K562 (cell line): ENCODE measurements at regions of chr10 and their contacts with region 1.

Region 1: GRCh38 chr10:50417886-50418830 is 166.8 kb upstream of the ASAH2 start:
- DNase-seq: peak; percentile 77 to 94 (median 84)
- ATAC-seq: peak; percentile 81
- H3K4me3 ChIP-seq: peak overlapping the region; percentile 71
- H3K27ac ChIP-seq: peak overlapping the region; percentile 75
- H3K4me1 ChIP-seq: peaks cover 8 to 42% of the 10 kb centered on the region in 2 experiments
- H3K27me3 ChIP-seq: no peaks in the 10 kb centered on the region
- CTCF ChIP-seq: no peak
- EP300 ChIP-seq: peak; percentile 50; the same call in 1 of the 2 replicates
- POLR2A ChIP-seq: peak; percentile 76
- RAD21 ChIP-seq: no peak

Region 2: DNA sequence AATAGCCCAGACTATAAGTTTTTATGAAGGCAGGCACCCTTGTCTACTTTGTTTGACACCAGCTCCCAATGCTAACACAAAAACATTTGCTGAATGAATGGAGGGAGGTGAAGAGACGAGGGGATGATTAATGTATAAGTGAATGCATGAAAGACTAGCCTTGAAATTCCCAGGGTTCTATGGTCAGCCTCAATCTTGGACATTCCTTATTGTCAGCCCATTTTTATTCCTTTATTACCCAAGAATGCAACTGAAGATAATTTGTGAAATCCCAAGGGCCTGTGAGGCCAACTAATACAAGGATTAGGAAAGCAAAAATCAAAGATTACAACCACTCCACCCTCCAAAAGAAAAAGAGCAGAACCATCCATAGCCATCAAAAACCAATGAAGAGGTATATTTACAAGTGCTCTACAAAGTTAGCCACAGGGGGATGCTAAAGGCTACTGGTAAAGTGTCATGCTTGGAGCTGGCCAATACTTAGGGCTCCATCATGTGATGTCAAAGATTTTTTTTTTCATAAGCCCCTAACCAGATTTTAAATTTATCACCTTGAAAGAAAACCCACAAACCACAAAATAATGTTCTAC is 126.8 kb before region 1 on chr10:
- CTCF ChIA-PET with region 1: interaction called, 4 read pairs
- POLR2A ChIA-PET with region 1: no interaction called
- in situ Hi-C with region 1: no loop called
- intact Hi-C with region 1: loop called (anchors 1 kb)
- DNase-seq: peak; percentile 42 to 68 (median 60)
- ATAC-seq: peak; percentile 88
- H3K4me3 ChIP-seq: no peak overlapping the region
- H3K27ac ChIP-seq: no peak overlapping the region
- H3K4me1 ChIP-seq: peaks cover 9 to 16% of the 10 kb centered on the region in 2 experiments; a peak in 3 of 5 replicates
- H3K27me3 ChIP-seq: no peaks in the 10 kb centered on the region
- CTCF ChIP-seq: peak; percentile 74 to 89 (median 76)
- EP300 ChIP-seq: no peak
- POLR2A ChIP-seq: no peak
- RAD21 ChIP-seq: peak; percentile 91 to 97

Region 3: DNA sequence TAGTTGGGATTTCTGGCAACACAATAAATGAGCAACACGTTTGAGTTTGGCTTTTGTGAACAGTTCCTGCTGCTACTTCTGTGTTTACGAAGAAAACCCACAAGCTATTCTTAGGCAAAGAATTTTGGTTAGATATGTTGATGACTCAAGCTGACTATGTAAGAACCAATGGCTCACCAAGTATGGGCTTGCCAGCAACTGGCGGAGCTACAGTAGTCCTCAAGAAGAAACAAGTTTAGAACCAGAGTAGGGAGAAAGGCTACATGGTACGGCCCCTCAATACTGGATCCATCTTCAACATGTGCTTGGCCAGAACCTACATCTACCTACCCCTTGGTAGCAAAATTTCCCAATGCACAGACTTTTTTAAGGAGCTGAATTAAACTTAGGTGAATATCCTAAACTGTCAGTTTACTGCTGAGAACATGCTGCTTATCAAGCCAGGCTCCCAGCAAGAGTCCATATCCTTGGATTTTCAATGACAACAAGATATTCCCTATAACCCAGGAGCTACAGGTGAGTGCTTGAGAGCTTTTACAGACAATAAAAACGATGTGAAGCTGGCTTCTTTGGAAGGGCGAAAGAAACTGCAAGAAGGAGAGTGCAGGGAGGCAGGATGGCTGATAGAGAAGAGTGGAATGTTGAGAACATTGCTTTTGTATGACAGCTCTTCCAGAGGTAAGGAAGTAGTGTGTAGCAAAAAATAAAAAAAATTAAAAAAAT is 92.5 kb before region 1 on chr10:
- CTCF ChIA-PET with region 1: no interaction called
- POLR2A ChIA-PET with region 1: interaction called, 4 read pairs
- in situ Hi-C with region 1: no loop called
- intact Hi-C with region 1: loop called (anchors 2 kb)
- DNase-seq: peak in 3 of 4 experiments; percentile 39 to 92 (median 74)
- ATAC-seq: peak; percentile 58
- H3K4me3 ChIP-seq: peak overlapping the region; percentile 32
- H3K27ac ChIP-seq: peak overlapping the region; percentile 97
- H3K4me1 ChIP-seq: peaks cover 19 to 80% of the 10 kb centered on the region in 2 experiments
- H3K27me3 ChIP-seq: no peaks in the 10 kb centered on the region
- CTCF ChIP-seq: no peak
- EP300 ChIP-seq: peak; percentile 88; the same call in 1 of the 2 replicates
- POLR2A ChIP-seq: no peak
- RAD21 ChIP-seq: no peak

Region 4: GRCh38 chr10:50396491-50397311 is 21.5 kb before region 1 on chr10:
- CTCF ChIA-PET with region 1: no interaction called
- POLR2A ChIA-PET with region 1: interaction called, 5 read pairs
- in situ Hi-C with region 1: no loop called
- intact Hi-C with region 1: loop called (anchors 2 kb)
- DNase-seq: peak in 2 of 4 experiments; percentile 37 to 75
- ATAC-seq: peak; percentile 79
- H3K4me3 ChIP-seq: no peak overlapping the region
- H3K27ac ChIP-seq: peak overlapping the region; percentile 37; the same call in 1 of the 3 replicates
- H3K4me1 ChIP-seq: peaks cover 14 to 57% of the 10 kb centered on the region in 2 experiments
- H3K27me3 ChIP-seq: no peaks in the 10 kb centered on the region
- CTCF ChIP-seq: no peak
- EP300 ChIP-seq: no peak; the same call in 1 of the 2 replicates
- POLR2A ChIP-seq: no peak
- RAD21 ChIP-seq: no peak

Region 5: DNA sequence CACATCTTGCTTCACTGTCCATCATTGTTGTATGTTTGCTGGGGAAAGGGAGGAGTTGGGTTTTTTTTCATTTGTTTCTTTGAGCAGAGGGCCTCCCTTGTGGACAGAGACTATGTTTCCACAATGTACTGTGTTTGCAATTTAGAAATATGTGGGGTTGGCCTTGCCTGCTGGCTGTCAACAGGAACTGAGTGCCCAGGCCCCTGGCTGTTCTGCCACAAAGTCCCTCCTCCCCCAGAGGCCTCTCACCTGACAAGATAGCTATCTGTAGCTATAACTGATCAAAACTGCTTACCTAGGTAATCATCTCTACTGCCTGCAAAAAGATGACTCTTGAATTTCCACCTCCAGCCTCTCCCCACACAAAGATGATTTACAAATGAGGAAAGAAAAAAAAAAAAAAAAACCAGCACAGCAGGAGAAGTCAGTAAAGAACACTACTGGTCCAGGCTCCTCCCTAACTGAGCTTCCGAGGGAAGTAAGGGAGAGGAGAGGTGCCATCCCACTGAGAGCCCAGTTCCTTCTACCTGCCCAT is 83.8 kb after region 1 on chr10:
- CTCF ChIA-PET with region 1: no interaction called
- POLR2A ChIA-PET with region 1: no interaction called
- in situ Hi-C with region 1: no loop called
- intact Hi-C with region 1: loop called (anchors 5 kb)
- DNase-seq: no peak
- ATAC-seq: peak; percentile 16
- H3K4me3 ChIP-seq: no peak overlapping the region
- H3K27ac ChIP-seq: no peak overlapping the region
- H3K4me1 ChIP-seq: peaks cover 8 to 30% of the 10 kb centered on the region in 2 experiments; a peak in 4 of 5 replicates
- H3K27me3 ChIP-seq: no peaks in the 10 kb centered on the region
- CTCF ChIP-seq: no peak
- EP300 ChIP-seq: no peak
- POLR2A ChIP-seq: no peak
- RAD21 ChIP-seq: no peak

Region 6: DNA sequence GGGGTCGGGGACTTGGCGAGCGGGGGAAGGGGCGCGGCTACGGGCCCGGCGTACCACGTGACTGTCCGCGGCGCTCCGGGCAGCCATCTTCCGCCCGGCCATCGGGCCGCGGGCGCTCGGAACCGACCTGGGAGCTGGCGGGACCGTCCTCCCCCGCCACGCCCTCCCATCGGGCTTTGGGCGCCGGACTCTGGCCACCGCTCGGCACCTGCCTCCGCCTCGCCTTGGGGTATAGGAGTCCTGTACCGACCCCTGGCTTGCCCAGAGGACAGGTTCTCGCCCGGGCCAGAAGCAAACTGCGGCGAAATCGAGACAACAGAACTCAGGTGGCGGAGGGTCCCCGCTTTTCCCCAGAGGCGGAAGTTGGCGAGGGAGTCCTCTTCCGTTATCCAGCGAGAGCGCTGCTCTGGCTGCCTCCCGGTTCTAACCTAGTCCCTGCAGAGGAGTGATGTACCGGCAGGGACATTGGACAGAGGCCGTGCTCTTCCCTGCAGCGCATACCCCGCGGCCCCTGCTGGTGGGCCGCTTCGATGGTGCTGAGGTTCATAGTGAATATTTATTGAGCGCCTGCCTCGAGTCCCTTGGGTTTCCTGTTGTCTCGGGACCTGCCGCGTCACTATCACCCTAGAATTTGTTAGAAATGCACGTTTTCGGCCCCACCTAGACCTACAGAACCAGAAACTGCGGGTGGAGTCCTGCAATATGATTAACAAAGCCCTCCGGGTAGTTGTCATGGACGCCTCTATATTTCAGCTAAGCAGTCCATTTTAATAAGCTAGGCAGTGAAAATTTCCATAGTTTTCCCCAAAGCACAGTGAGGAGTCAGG is 206.9 kb after region 1 on chr10:
- CTCF ChIA-PET with region 1: interaction called, 4 read pairs
- POLR2A ChIA-PET with region 1: interaction called, 6 read pairs
- in situ Hi-C with region 1: no loop called
- intact Hi-C with region 1: loop called (anchors 2 kb)
- DNase-seq: peak; percentile 91 to 93 (median 92)
- ATAC-seq: peak; percentile 73
- H3K4me3 ChIP-seq: peak overlapping the region; percentile 77
- H3K27ac ChIP-seq: peak overlapping the region; percentile 82
- H3K4me1 ChIP-seq: peaks cover 10 to 34% of the 10 kb centered on the region in 2 experiments
- H3K27me3 ChIP-seq: no peaks in the 10 kb centered on the region
- CTCF ChIP-seq: peak; percentile 75 to 97 (median 80)
- EP300 ChIP-seq: peak; percentile 5; the same call in 1 of the 2 replicates
- POLR2A ChIP-seq: peak; percentile 84
- RAD21 ChIP-seq: peak; percentile 71